Dendritic cell treated with granulocyte-macrophage colony-stimulating factor and Interleukin-4, amounts not matched to agents 40 ng/mL and 50 ng/mL, for 4 days (primary cell): ENCODE measurements at regions of chr12 and their contacts with region 1.

Region 1: GRCh38 chr12:30847259-30847658 is 79.3 kb upstream of the TSPAN11 start:
- H3K4me3 Mint-ChIP-seq: no peak overlapping the region
- H3K27ac Mint-ChIP-seq: no peak overlapping the region
- H3K4me1 Mint-ChIP-seq: peaks cover 8% of the 10 kb centered on the region
- H3K27me3 Mint-ChIP-seq: peaks cover 6% of the 10 kb centered on the region

Region 2: DNA sequence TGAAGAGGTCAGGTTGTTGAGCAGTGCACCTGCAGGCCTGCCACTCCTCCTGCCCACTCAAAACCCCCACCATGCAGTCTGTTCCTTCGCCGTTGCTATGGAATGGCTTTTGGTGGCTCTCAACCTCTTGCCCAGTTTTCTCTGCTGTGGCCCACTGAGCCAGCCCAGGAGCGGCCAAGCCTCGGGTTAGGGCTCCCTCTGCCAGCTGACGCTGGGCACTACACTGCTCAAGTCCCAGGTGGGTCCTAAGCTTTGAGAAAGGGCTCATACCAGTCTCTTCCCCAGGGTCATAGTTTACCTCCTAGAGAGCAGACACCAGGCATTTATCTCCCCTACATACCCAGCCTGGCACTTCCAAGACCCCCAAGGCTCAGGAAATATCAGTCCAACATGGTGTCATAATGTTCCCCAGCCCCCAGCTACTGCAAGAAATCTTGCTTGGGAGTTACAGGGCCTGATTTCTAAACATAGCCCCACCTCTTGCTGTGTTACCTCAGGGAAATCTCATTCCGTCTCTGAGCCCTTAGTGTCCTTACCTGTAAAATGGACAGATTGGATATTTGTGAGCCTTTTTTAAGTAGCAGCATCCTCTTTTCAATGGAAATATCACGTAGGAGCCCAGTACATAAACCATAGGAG is 138.7 kb after region 1 on chr12:
- intact Hi-C with region 1: loop called (anchors 10 kb)
- H3K4me3 Mint-ChIP-seq: no peak overlapping the region
- H3K27ac Mint-ChIP-seq: no peak overlapping the region
- H3K4me1 Mint-ChIP-seq: no peaks in the 10 kb centered on the region
- H3K27me3 Mint-ChIP-seq: no peaks in the 10 kb centered on the region

Region 3: GRCh38 chr12:31238764-31239387 is 391.6 kb after region 1 on chr12:
- intact Hi-C with region 1: loop called (anchors 2 kb)
- H3K4me3 Mint-ChIP-seq: no peak overlapping the region
- H3K27ac Mint-ChIP-seq: no peak overlapping the region
- H3K4me1 Mint-ChIP-seq: no peaks in the 10 kb centered on the region
- H3K27me3 Mint-ChIP-seq: peaks cover 13% of the 10 kb centered on the region

Region 4: DNA sequence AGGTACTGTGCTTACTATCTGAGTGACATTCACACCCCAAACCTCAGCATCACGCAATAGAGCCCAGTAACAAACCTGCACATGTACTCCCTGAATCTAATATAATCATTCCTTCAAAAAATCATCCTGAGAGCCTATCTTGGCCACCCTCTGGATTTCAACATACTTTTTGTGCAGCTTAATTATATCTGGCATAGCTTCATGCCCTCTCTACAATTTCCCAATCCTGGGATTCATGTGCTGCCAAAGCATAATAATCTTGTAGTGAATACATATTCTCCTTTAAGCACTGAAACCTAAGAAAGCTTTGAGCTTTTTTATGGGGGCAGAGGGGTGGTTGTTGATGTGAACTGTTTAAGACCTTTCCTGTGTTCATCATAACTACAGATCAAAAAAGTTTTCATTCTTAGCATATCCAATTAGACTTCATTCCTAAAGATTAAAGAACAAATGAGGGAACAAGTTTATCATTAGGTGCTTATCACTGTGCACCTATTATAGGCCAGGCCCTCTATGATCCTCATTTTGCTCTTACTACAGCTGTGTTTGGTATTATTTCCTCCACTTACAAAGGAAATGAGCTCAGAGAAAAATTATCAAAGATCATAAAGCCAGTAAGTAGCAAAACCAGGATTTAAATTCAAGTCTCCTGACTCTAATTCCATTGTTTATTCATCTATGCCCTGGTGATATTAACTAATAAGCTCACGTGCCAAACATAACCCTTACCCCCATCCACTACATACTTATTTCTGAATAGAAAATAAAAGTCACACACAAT is 427.5 kb after region 1 on chr12:
- intact Hi-C with region 1: loop called (anchors 2 kb)
- H3K4me3 Mint-ChIP-seq: no peak overlapping the region
- H3K27ac Mint-ChIP-seq: no peak overlapping the region
- H3K4me1 Mint-ChIP-seq: no peaks in the 10 kb centered on the region
- H3K27me3 Mint-ChIP-seq: no peaks in the 10 kb centered on the region